H1 (cell line): ENCODE measurements at regions of chr20 and their contacts with region 1.

Region 1: GRCh38 chr20:62793912-62794724 is 2.2 kb upstream of the MRGBP start:
- DNase-seq: peak; percentile 86 to 98
- H3K4me3 ChIP-seq: peak overlapping the region; percentile 21 to 65 (median 46); a peak in 7 of 8 replicates
- H3K27ac ChIP-seq: no peak overlapping the region
- H3K4me1 ChIP-seq: peaks cover 0 to 11% (median 6%) of the 10 kb centered on the region in 4 experiments; a peak in 4 of 7 replicates
- H3K27me3 ChIP-seq: peaks cover 0 to 18% (median 11%) of the 10 kb centered on the region in 4 experiments; a peak in 5 of 7 replicates
- CTCF ChIP-seq: no peak
- EP300 ChIP-seq: no peak
- POLR2A ChIP-seq: no peak
- RAD21 ChIP-seq: no peak

Region 2: DNA sequence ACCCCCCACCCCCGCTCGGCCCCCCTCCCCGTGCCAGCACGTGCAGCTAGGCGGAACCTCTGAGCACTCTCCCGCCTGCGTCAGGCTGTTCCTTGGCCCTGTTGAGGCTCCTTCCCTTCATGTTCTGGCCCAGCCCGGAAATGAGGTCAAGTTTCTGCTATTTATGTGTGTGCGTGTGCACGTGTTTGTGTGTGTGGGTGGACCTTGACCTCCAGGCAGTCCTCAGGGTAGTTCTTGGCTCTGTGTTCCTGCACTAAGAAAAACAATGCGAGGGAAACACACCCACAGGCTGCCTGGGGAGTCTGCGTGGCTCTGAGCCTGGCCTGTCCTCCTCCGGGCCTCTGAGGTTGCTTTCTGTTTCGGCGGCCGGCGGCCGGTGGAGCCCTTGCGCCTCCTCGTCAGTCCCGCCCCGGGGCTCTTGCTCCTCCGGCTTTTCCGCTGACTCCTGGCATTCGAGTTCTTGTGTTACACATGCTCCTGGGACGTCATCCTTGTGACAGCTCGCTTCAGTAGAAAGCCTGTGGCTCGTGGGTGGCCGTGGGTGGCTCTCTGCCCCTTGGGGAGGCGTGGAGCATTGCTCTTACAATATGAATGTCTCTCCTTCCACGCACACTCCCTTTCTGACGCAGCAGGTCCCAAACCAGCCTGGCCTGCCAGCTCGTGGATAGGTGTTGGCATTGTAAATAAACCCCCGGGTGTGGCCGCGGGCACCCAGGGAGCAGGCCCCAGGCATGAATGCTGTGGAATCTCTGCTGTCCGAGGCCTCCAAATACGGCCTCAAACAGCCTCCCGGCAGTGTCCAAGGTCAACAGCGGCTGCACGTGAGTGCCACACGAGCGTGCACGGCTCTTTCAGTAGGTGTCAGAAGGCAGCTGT is 141.8 kb before region 1 on chr20:
- CTCF ChIA-PET with region 1: interaction called, 11 read pairs
- POLR2A ChIA-PET with region 1: no interaction called
- DNase-seq: peak in 1 of 2 experiments; percentile 64
- H3K4me3 ChIP-seq: no peak overlapping the region
- H3K27ac ChIP-seq: no peak overlapping the region
- H3K4me1 ChIP-seq: peaks cover 0 to 14% (median 9%) of the 10 kb centered on the region in 4 experiments; a peak in 5 of 7 replicates
- H3K27me3 ChIP-seq: no peaks in the 10 kb centered on the region
- CTCF ChIP-seq: no peak
- EP300 ChIP-seq: no peak
- POLR2A ChIP-seq: no peak
- RAD21 ChIP-seq: no peak

Region 3: GRCh38 chr20:62685781-62686555 is 108.2 kb before region 1 on chr20:
- CTCF ChIA-PET with region 1: interaction called, 47 read pairs
- POLR2A ChIA-PET with region 1: no interaction called
- DNase-seq: no peak
- H3K4me3 ChIP-seq: no peak overlapping the region
- H3K27ac ChIP-seq: no peak overlapping the region
- H3K4me1 ChIP-seq: peaks cover 0 to 3% (median 0%) of the 10 kb centered on the region in 4 experiments; a peak in 2 of 7 replicates
- H3K27me3 ChIP-seq: no peaks in the 10 kb centered on the region; a peak in 1 of 7 replicates
- CTCF ChIP-seq: no peak
- EP300 ChIP-seq: no peak
- POLR2A ChIP-seq: no peak
- RAD21 ChIP-seq: no peak

Region 4: DNA sequence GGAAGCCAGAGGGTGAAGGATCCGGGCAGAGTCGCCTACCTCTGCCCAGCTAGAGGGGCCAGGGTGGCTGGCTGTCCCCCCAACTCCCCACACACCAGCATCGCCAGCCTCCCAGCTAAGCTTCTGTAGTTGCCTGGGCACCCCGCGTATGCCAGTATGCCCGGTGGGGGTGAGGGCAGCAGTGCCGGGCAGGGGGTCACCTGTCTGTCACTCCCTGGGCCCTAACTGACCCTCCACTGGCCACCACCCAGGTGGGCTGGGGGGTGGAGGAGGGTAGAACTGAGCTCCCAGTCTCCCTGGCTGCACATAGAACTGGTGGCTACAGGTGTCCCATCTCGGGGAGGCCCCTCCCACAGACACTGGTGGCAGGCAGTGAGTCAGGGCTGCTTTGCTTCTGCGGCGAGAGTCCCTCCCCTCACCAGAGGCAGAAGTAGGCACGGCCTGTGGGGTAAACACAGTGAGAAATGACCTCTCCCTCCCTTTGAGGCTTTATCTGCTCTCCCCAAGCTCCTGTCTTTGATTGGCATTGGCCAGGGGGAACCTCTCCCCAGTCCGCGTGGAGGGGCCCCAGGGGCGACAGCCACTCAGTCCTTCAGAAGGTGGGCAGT is 83.1 kb before region 1 on chr20:
- CTCF ChIA-PET with region 1: interaction called, 38 read pairs
- POLR2A ChIA-PET with region 1: no interaction called
- DNase-seq: no peak
- H3K4me3 ChIP-seq: no peak overlapping the region
- H3K27ac ChIP-seq: no peak overlapping the region
- H3K4me1 ChIP-seq: peaks cover 0 to 8% (median 7%) of the 10 kb centered on the region in 4 experiments; a peak in 5 of 7 replicates
- H3K27me3 ChIP-seq: peaks cover 22 to 38% (median 31%) of the 10 kb centered on the region in 4 experiments
- CTCF ChIP-seq: no peak
- EP300 ChIP-seq: no peak
- POLR2A ChIP-seq: no peak
- RAD21 ChIP-seq: no peak

Region 5: DNA sequence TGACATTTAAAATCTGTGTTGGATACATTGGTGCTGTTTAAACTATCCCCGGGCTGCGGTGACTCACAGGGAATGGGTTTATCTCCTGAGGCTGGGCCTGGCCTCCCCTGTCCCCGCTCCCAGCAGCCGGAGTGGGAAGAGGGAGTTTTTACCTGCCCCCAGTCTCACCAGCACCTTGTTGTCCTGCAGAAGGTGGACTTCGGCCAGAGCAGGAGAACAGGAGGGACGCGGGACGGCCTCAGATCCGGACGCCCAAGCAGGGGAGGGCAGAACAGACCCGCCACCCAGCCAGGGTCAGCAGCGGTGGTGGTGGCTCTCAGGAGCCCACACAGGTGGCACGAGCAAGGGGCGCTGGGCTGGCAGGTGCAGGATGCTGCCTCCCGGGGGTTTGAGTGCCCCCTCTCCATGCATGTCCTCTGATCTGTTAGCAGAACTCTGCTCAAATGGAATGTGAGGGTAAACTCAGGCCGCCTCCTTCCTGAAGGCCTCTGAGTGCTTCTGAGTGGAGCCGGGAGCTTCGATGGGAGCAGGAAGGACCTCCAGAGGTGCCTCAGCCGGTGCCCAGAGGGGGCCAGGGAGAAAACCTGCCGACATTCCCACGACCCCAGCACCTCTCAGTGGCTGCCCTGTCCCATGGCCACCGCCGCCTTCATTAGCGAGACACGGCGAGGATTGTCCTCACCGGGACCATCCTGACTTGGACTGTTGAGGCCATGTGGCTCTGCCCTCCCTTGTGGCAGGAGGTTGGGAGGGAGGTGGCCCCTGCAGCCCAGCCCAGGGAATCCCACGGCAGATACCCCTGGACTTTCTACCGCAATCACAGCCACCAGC is 41.2 kb before region 1 on chr20:
- CTCF ChIA-PET with region 1: interaction called, 15 read pairs
- POLR2A ChIA-PET with region 1: interaction called, 3 read pairs
- DNase-seq: no peak
- H3K4me3 ChIP-seq: no peak overlapping the region
- H3K27ac ChIP-seq: no peak overlapping the region
- H3K4me1 ChIP-seq: peaks cover 0 to 10% (median 6%) of the 10 kb centered on the region in 4 experiments; a peak in 5 of 7 replicates
- H3K27me3 ChIP-seq: no peaks in the 10 kb centered on the region; a peak in 2 of 7 replicates
- CTCF ChIP-seq: no peak
- EP300 ChIP-seq: no peak
- POLR2A ChIP-seq: no peak
- RAD21 ChIP-seq: no peak

Region 6: GRCh38 chr20:62782149-62782892 is 11.8 kb before region 1 on chr20:
- CTCF ChIA-PET with region 1: interaction called, 35 read pairs
- POLR2A ChIA-PET with region 1: interaction called, 5 read pairs
- DNase-seq: no peak
- H3K4me3 ChIP-seq: no peak overlapping the region
- H3K27ac ChIP-seq: no peak overlapping the region
- H3K4me1 ChIP-seq: peaks cover 0 to 8% (median 1%) of the 10 kb centered on the region in 4 experiments; a peak in 2 of 7 replicates
- H3K27me3 ChIP-seq: no peaks in the 10 kb centered on the region
- CTCF ChIP-seq: peak; percentile 21 to 45 (median 33); a peak in 3 of 4 replicates
- EP300 ChIP-seq: no peak
- POLR2A ChIP-seq: no peak
- RAD21 ChIP-seq: no peak; a peak in 2 of 4 replicates

Region 7: DNA sequence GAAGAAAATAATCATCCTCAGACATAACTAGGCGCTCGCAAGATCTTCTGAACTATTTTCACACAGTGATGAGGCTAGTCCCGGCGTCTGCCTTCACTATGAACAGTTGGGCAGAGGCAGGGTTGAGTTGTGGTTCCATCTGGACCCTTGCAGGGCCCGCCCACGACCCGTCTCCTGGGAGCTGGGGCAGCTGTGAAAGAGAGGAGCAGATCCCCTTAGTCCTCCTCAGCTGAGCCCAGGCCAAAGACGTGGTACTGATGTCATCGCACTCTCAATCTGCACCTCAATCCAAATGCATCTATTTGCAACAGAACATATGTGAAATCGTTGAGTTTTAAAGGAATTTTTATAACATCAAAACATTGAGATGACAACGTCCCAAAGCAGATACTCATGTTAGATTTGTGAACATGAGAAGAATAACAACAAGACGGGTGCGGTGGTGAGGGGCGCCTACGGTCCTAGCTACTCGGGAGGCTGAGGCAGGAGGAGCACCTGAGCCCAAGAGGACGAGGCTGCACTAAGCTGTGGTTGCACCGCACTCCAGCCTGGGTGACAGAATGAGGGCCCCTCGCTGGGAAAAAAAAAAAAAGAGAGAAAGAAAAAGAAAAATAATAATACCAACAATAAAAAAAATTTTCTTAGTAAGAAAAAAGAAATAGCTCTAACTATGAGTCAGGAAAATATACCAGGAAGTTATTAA is 52.2 kb after region 1 on chr20:
- CTCF ChIA-PET with region 1: no interaction called
- POLR2A ChIA-PET with region 1: no interaction called
- DNase-seq: no peak
- H3K4me3 ChIP-seq: no peak overlapping the region
- H3K27ac ChIP-seq: no peak overlapping the region
- H3K4me1 ChIP-seq: peaks cover 0 to 3% (median 0%) of the 10 kb centered on the region in 4 experiments; a peak in 3 of 7 replicates
- H3K27me3 ChIP-seq: no peaks in the 10 kb centered on the region
- CTCF ChIP-seq: no peak
- EP300 ChIP-seq: no peak
- POLR2A ChIP-seq: no peak
- RAD21 ChIP-seq: no peak